Body of pancreas (tissue), 4 donors: ENCODE measurements at regions of chr3 and their contacts with region 1.

Region 1: DNA sequence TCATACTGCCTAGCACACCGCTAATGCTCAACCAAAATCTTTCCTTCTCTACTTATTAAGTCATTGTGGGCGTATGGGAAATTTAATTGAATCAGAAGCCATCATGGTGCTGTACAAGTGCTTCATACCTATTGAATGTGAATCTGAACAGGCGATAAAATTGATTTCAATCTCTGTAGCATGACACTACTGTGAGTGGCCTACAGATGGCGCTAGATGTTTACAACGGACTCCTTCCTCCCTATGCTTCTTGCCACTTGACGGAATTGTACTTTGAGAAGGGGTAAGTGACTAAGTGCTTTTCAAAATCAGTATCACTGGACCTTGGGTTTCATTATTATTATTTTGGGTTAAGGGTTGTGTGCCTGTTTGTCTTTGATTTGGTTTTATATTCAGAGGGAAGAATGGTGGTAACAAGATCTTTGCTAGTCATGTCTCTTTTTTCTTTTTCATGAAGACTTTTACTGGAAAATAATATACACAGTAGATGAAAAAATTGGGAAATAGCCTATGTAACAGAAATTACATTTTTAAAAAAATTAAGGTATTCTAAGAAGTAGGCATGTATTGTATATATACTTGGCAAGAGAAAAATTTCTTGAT is 35.4 kb downstream of the ACP3 start:
- DNase-seq: peak; percentile 67 to 77 (median 71)
- ATAC-seq: peak; percentile 87
- H3K4me3 ChIP-seq: no peak overlapping the region
- H3K27ac ChIP-seq: no peak overlapping the region
- H3K4me1 ChIP-seq: no peaks in the 10 kb centered on the region
- H3K27me3 ChIP-seq: no peaks in the 10 kb centered on the region
- CTCF ChIP-seq: peak; percentile 59 to 86 (median 79)
- POLR2A ChIP-seq: no peak

Region 2: DNA sequence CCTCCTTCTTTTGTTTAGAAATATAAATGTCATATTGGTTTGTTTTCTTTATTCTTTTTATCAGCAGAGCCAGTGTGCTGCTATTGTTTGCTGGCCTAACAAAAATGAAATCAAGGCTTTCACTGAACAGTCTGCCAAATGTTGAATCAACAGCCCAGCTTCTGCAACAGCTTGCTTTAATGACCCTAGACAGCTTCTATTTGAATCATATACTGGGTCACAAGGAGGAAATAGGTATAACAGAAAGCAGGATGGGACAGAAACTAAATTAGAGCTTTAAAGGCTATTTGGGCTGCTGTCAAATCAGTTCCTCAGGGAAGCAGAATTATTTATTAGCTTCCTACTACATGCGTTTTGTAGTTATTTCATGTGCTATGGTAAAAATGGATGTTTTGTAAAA is 52.5 kb after region 1 on chr3:
- intact Hi-C with region 1: loop called (anchors 10 kb)
- DNase-seq: no peak
- ATAC-seq: no peak
- H3K4me3 ChIP-seq: no peak overlapping the region
- H3K27ac ChIP-seq: no peak overlapping the region
- H3K4me1 ChIP-seq: peaks cover 9% of the 10 kb centered on the region
- H3K27me3 ChIP-seq: no peaks in the 10 kb centered on the region
- CTCF ChIP-seq: no peak
- POLR2A ChIP-seq: no peak